ENCODE measurements at regions of chr18 and their contacts with region 1.

Region 1: GRCh38 chr18:63016270-63016669 is 300.9 kb downstream of the PHLPP1 start:
- DNase-seq: peak; percentile 76
- CTCF ChIP-seq: peak; percentile 53

Region 2: GRCh38 chr18:62802523-62802922 is 213.7 kb before region 1 on chr18:
- in situ Hi-C with region 1: no loop called
- DNase-seq: no peak
- CTCF ChIP-seq: peak; percentile 10

Region 3: DNA sequence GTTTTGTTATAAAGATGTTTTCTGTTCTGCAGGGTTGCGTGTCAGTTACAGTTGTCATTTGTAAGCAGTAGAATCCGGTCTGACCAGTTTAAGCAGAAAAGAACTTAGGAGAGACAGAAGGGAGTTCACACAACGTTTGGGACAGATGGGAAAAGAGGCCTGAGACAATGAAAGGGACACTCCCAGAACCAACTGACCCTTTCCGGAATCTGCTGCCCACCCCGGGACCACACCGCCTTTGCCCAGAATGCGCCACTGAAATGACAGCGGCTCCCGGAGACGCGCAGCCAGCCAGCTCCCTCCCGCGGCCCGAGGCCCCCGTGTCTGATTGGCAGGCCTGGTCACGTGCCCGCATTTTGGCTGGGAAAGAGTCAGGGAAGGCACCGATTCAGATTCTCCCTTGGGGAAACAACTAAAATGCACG is 58.7 kb after region 1 on chr18:
- in situ Hi-C with region 1: loop called (anchors 10 kb)
- DNase-seq: peak; percentile 71
- CTCF ChIP-seq: no peak

Region 4: GRCh38 chr18:63320046-63320689 is 303.9 kb after region 1 on chr18:
- in situ Hi-C with region 1: loop called (anchors 5 kb)
- DNase-seq: peak; percentile 90
- CTCF ChIP-seq: peak; percentile 24

Region 5: DNA sequence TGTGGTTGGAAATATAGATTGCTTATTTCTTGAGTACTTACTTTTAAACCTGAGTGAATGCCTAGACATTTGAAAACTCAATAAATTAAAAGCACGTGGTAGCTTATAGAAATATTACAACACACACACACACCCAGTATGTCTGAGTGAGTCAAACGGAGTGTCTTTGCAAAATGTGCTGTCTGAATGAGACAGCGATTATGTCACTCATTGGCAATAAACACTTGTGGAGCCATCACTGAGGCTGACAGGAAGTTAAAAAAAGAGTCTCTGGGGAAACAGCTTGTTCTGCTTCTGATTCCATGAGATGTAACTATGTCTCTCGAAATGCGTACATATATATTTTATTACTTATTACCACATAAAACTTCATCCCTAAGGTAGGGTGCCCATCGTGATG is 428.3 kb after region 1 on chr18:
- in situ Hi-C with region 1: loop called (anchors 10 kb)
- DNase-seq: no peak
- CTCF ChIP-seq: no peak